CD4-positive, alpha-beta memory T cell (primary cell): ENCODE measurements at regions of chr1 and their contacts with region 1.

Region 1: GRCh38 chr1:161071886-161072371 is 2.2 kb upstream of the ARHGAP30 start:
- DNase-seq: peak in 4 of 5 donors; percentile 35 to 39 (median 37)
- H3K4me3 ChIP-seq: no peak overlapping the region
- H3K4me3 Mint-ChIP-seq: peak overlapping the region in 1 of 8 donors; percentile 17
- H3K27ac ChIP-seq: no peak overlapping the region
- H3K27ac Mint-ChIP-seq: peak overlapping the region in 6 of 7 donors; percentile 68 to 92 (median 72)
- H3K4me1 ChIP-seq: peaks cover 30% of the 10 kb centered on the region
- H3K4me1 Mint-ChIP-seq: peaks cover 24 to 56% (median 33%) of the 10 kb centered on the region in 4 donors
- H3K27me3 ChIP-seq: no peaks in the 10 kb centered on the region
- H3K27me3 Mint-ChIP-seq: no peaks in the 10 kb centered on the region

Region 2: GRCh38 chr1:160997323-160998038 is 74.4 kb before region 1 on chr1:
- CTCF ChIA-PET with region 1: interaction called, 31 read pairs
- POLR2A ChIA-PET with region 1: interaction called, 11 read pairs
- intact Hi-C with region 1: no loop called
- DNase-seq: peak in 4 of 5 donors; percentile 30 to 42 (median 38)
- H3K4me3 ChIP-seq: no peak overlapping the region
- H3K4me3 Mint-ChIP-seq: no peak overlapping the region
- H3K27ac ChIP-seq: no peak overlapping the region
- H3K27ac Mint-ChIP-seq: peak overlapping the region; percentile 22 to 93 (median 84)
- H3K4me1 ChIP-seq: peaks cover 8% of the 10 kb centered on the region
- H3K4me1 Mint-ChIP-seq: peaks cover 4 to 8% (median 5%) of the 10 kb centered on the region in 4 donors
- H3K27me3 ChIP-seq: no peaks in the 10 kb centered on the region
- H3K27me3 Mint-ChIP-seq: no peaks in the 10 kb centered on the region

Region 3: GRCh38 chr1:161021165-161021960 is 50.6 kb before region 1 on chr1:
- CTCF ChIA-PET with region 1: interaction called, 5 read pairs
- POLR2A ChIA-PET with region 1: interaction called, 42 read pairs
- intact Hi-C with region 1: no loop called
- DNase-seq: peak; percentile 88 to 98 (median 91)
- H3K4me3 ChIP-seq: peak overlapping the region; percentile 40 to 72
- H3K4me3 Mint-ChIP-seq: peak overlapping the region; percentile 89 to 97 (median 94)
- H3K27ac ChIP-seq: peak overlapping the region; percentile 72
- H3K27ac Mint-ChIP-seq: peak overlapping the region; percentile 86 to 99 (median 96)
- H3K4me1 ChIP-seq: peaks cover 36% of the 10 kb centered on the region
- H3K4me1 Mint-ChIP-seq: peaks cover 24 to 58% (median 35%) of the 10 kb centered on the region in 4 donors
- H3K27me3 ChIP-seq: no peaks in the 10 kb centered on the region
- H3K27me3 Mint-ChIP-seq: no peaks in the 10 kb centered on the region

Region 4: GRCh38 chr1:161082991-161083742 is 11.2 kb after region 1 on chr1:
- CTCF ChIA-PET with region 1: interaction called, 7 read pairs
- POLR2A ChIA-PET with region 1: interaction called, 10 read pairs
- intact Hi-C with region 1: no loop called
- DNase-seq: no peak
- H3K4me3 ChIP-seq: no peak overlapping the region
- H3K4me3 Mint-ChIP-seq: no peak overlapping the region
- H3K27ac ChIP-seq: no peak overlapping the region
- H3K27ac Mint-ChIP-seq: peak overlapping the region in 1 of 7 donors; percentile 19
- H3K4me1 ChIP-seq: no peaks in the 10 kb centered on the region
- H3K4me1 Mint-ChIP-seq: no peaks in the 10 kb centered on the region
- H3K27me3 ChIP-seq: no peaks in the 10 kb centered on the region
- H3K27me3 Mint-ChIP-seq: no peaks in the 10 kb centered on the region

Region 5: GRCh38 chr1:161132410-161133219 is 60.7 kb after region 1 on chr1 and contains the start of gene DEDD:
- CTCF ChIA-PET with region 1: interaction called, 8 read pairs
- POLR2A ChIA-PET with region 1: interaction called, 33 read pairs
- intact Hi-C with region 1: no loop called
- DNase-seq: peak; percentile 92 to 95 (median 93)
- H3K4me3 ChIP-seq: peak within 1 kb of the TSS; percentile 80 to 100
- H3K4me3 Mint-ChIP-seq: peak within 1 kb of the TSS in 1 of 8 donors; percentile 91
- H3K27ac ChIP-seq: peak within 1 kb of the TSS; percentile 95
- H3K27ac Mint-ChIP-seq: peak within 1 kb of the TSS in 3 of 7 donors; percentile 91 to 99 (median 95)
- H3K4me1 ChIP-seq: peaks cover 51% of the 10 kb centered on the region
- H3K4me1 Mint-ChIP-seq: peaks cover 29 to 43% (median 40%) of the 10 kb centered on the region in 4 donors
- H3K27me3 ChIP-seq: no peaks in the 10 kb centered on the region
- H3K27me3 Mint-ChIP-seq: no peaks in the 10 kb centered on the region
- total RNA-seq, gene DEDD: 39.1 to 41.4 TPM